ENCODE measurements at regions of chr2 and their contacts with region 1.

Region 1: GRCh38 chr2:196268538-196269338 is 97.4 kb upstream of the STK17B start:
- DNase-seq: peak; percentile 78
- ATAC-seq: peak; percentile 68
- H3K4me3 ChIP-seq: peak overlapping the region in 4 of 5 experiments; percentile 19 to 59 (median 31)
- H3K4me3 Mint-ChIP-seq: peak overlapping the region; percentile 75
- H3K27ac ChIP-seq: peak overlapping the region; percentile 74 to 90
- H3K27ac Mint-ChIP-seq: peak overlapping the region; percentile 95
- H3K4me1 ChIP-seq: peaks cover 35 to 57% of the 10 kb centered on the region in 2 donors
- H3K4me1 Mint-ChIP-seq: peaks cover 51% of the 10 kb centered on the region
- H3K27me3 ChIP-seq: no peaks in the 10 kb centered on the region
- H3K27me3 Mint-ChIP-seq: no peaks in the 10 kb centered on the region
- CTCF ChIP-seq: no peak

Region 2: DNA sequence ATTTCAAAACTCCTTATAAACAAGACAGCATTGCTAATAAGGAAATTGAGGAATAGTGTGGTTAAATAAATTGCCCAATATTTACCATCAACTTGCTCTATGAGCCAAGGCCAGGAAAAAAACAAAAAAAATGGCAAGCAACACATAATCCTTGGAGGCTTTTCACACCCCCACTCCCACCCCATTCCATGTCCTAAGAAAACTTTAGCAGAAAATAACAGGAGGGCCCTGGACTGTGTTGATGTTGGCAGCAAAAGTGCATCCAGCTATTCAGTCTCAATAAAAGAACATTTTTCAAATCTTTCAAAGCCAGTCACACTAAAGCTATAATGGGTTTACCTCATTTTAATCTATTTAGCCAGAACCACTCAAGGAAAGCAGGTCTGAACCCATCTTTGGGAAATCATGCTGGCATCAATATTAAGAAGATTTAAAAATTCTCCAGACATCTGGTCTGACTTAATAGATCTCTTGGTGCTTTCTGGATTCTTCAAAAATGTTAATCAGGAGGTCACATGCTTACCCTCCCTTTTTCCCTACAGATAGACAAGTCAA is 62.8 kb before region 1 on chr2:
- CTCF ChIA-PET with region 1: interaction called, 3 read pairs
- POLR2A ChIA-PET with region 1: interaction called, 3 read pairs
- intact Hi-C with region 1: loop called (anchors 2 kb)
- DNase-seq: no peak
- ATAC-seq: no peak
- H3K4me3 ChIP-seq: no peak overlapping the region
- H3K4me3 Mint-ChIP-seq: no peak overlapping the region
- H3K27ac ChIP-seq: no peak overlapping the region
- H3K27ac Mint-ChIP-seq: no peak overlapping the region
- H3K4me1 ChIP-seq: peaks cover 18 to 20% of the 10 kb centered on the region in 2 donors
- H3K4me1 Mint-ChIP-seq: peaks cover 48% of the 10 kb centered on the region
- H3K27me3 ChIP-seq: no peaks in the 10 kb centered on the region
- H3K27me3 Mint-ChIP-seq: no peaks in the 10 kb centered on the region
- CTCF ChIP-seq: no peak

Region 3: GRCh38 chr2:196233021-196233804 is 35.5 kb before region 1 on chr2:
- CTCF ChIA-PET with region 1: interaction called, 71 read pairs
- POLR2A ChIA-PET with region 1: no interaction called
- intact Hi-C with region 1: loop called (anchors 5 kb)
- DNase-seq: peak; percentile 26
- ATAC-seq: peak; percentile 23
- H3K4me3 ChIP-seq: peak overlapping the region in 1 of 5 experiments; percentile 17
- H3K4me3 Mint-ChIP-seq: peak overlapping the region; percentile 36
- H3K27ac ChIP-seq: peak overlapping the region; percentile 76 to 82
- H3K27ac Mint-ChIP-seq: peak overlapping the region; percentile 94
- H3K4me1 ChIP-seq: peaks cover 72 to 77% of the 10 kb centered on the region in 2 donors
- H3K4me1 Mint-ChIP-seq: peaks cover 71% of the 10 kb centered on the region
- H3K27me3 ChIP-seq: no peaks in the 10 kb centered on the region
- H3K27me3 Mint-ChIP-seq: no peaks in the 10 kb centered on the region
- CTCF ChIP-seq: no peak